Activated B cell treated with CpG ODN at 0.5 μM for 24 hours (primary cell): ENCODE measurements at regions of chr16 and their contacts with region 1.

Region 1: DNA sequence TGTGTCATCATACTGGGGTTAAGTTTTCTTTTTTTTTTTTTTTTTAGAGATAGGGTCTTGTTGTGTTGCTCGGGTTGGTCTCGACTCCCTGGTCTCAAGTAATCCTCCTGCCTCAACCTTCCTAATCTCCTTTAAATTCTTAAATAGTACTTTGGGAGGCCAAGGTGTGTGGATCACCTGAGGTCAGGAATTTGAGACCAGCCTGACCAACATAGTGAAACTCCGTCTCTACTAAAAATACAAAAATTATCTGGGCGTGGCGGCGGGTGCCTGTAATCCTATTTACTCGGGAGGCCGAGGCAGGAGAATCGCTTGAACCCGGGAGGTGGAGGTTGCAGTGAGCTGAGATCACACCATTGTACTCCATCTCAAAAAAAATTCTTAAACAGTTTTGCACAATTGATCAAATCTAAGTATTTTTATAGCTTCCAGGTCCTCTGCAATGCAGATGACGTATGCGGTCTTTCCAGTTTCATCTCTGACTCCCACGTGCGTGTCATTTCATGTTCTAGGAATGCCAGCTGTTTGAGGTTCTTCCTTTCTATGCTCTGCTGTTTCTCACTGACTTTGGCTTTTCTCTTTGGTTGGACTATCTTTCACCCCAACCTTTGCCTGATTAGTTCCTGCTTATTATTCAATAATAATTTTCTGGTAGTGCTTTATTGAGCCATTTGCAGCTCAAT is 16.1 kb downstream of the CHP2 start:
- DNase-seq: no peak
- ATAC-seq: no peak
- H3K4me3 Mint-ChIP-seq: no peak overlapping the region
- H3K27ac Mint-ChIP-seq: no peak overlapping the region
- H3K4me1 Mint-ChIP-seq: no peaks in the 10 kb centered on the region
- H3K27me3 Mint-ChIP-seq: peaks cover 11% of the 10 kb centered on the region
- CTCF ChIP-seq: no peak

Region 2: GRCh38 chr16:23795378-23795777 is 24.5 kb after region 1 on chr16:
- CTCF ChIA-PET with region 1: no interaction called
- POLR2A ChIA-PET with region 1: no interaction called
- intact Hi-C with region 1: loop called (anchors 1 kb)
- DNase-seq: no peak
- ATAC-seq: no peak
- H3K4me3 Mint-ChIP-seq: no peak overlapping the region
- H3K27ac Mint-ChIP-seq: no peak overlapping the region
- H3K4me1 Mint-ChIP-seq: no peaks in the 10 kb centered on the region
- H3K27me3 Mint-ChIP-seq: no peaks in the 10 kb centered on the region
- CTCF ChIP-seq: no peak